Mammary epithelial cell (primary cell): ENCODE measurements at regions of chr11 and their contacts with region 1.

Region 1: GRCh38 chr11:28259177-28259843 is 151.1 kb downstream of the METTL15 start:
- DNase-seq: no peak
- H3K4me3 ChIP-seq: no peak overlapping the region
- H3K27ac ChIP-seq: no peak overlapping the region
- H3K4me1 ChIP-seq: no peaks in the 10 kb centered on the region
- H3K27me3 ChIP-seq: no peaks in the 10 kb centered on the region
- CTCF ChIP-seq: no peak

Region 2: GRCh38 chr11:28195449-28195848 is 63.9 kb before region 1 on chr11:
- CTCF ChIA-PET with region 1: no interaction called
- dilution Hi-C with region 1: loop called (anchors 5 kb)
- in situ Hi-C with region 1: no loop called
- intact Hi-C with region 1: no loop called
- DNase-seq: no peak
- H3K4me3 ChIP-seq: no peak overlapping the region
- H3K27ac ChIP-seq: no peak overlapping the region
- H3K4me1 ChIP-seq: no peaks in the 10 kb centered on the region
- H3K27me3 ChIP-seq: no peaks in the 10 kb centered on the region
- CTCF ChIP-seq: no peak